ENCODE measurements at regions of chr19 and their contacts with region 1.

Region 1: GRCh38 chr19:14571695-14572490 is at the start of gene NDUFB7:
- DNase-seq: peak; percentile 97
- H3K4me3 ChIP-seq: peak within 1 kb of the TSS; percentile 98
- H3K27ac ChIP-seq: no peak within 1 kb of the TSS
- H3K4me1 ChIP-seq: peaks cover 4% of the 10 kb centered on the region
- H3K27me3 ChIP-seq: no peaks in the 10 kb centered on the region
- total RNA-seq, gene NDUFB7: 186 and 244 TPM in 2 replicates

Region 2: DNA sequence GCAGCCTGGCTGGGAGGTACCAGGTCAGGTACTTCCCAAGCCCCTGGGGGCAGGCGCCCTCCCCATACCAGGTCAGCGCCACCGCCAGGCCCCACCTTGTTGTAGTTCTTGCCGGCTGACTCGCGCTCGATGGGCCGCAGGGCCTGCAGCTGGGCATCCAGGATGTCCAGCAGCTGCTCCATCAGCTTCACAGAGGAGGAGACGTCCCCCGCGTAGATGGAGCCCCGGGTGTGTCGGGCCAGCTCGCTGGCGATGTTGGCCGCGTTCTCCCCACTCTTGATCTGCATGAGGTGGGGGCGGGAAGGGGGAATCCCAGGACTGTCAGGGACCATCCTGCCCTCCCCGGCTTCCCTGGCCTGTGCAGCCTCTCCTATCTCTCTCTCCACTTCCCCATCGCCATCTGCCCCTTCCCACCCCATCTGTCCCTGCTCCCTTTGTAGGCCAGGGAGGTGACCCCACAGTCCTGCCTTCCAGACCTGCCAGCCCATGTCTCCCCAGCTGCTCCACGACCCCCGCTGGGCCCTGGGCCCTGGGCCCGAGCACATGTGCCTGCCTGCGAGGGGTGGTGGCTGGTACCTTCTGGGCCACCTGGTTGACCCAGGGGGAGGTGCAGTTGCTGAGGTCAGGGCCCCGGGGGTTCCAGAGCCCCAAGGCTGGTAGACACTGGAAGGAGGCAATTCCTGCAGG is 411.7 kb before region 1 on chr19:
- in situ Hi-C with region 1: no loop called
- DNase-seq: no peak
- H3K4me3 ChIP-seq: no peak overlapping the region
- H3K27ac ChIP-seq: no peak overlapping the region
- H3K4me1 ChIP-seq: no peaks in the 10 kb centered on the region
- H3K27me3 ChIP-seq: no peaks in the 10 kb centered on the region

Region 3: GRCh38 chr19:14405758-14406644 is 165.9 kb before region 1 on chr19:
- in situ Hi-C with region 1: no loop called
- DNase-seq: peak; percentile 86
- H3K4me3 ChIP-seq: no peak overlapping the region
- H3K27ac ChIP-seq: no peak overlapping the region
- H3K4me1 ChIP-seq: no peaks in the 10 kb centered on the region
- H3K27me3 ChIP-seq: no peaks in the 10 kb centered on the region

Region 4: GRCh38 chr19:14674764-14675163 is 102.9 kb after region 1 on chr19 and contains the start of gene ADGRE3:
- in situ Hi-C with region 1: no loop called
- DNase-seq: peak; percentile 5
- H3K4me3 ChIP-seq: no peak within 1 kb of the TSS
- H3K27ac ChIP-seq: no peak within 1 kb of the TSS
- H3K4me1 ChIP-seq: no peaks in the 10 kb centered on the region
- H3K27me3 ChIP-seq: no peaks in the 10 kb centered on the region
- total RNA-seq, gene ADGRE3: not detected in 2 replicates

Region 5: GRCh38 chr19:14689598-14690503 is 118.0 kb after region 1 on chr19 and contains the start of gene ZNF333:
- in situ Hi-C with region 1: loop called (anchors 5 kb)
- DNase-seq: peak; percentile 95
- H3K4me3 ChIP-seq: peak within 1 kb of the TSS; percentile 88
- H3K27ac ChIP-seq: peak within 1 kb of the TSS; percentile 84
- H3K4me1 ChIP-seq: peaks cover 8% of the 10 kb centered on the region
- H3K27me3 ChIP-seq: no peaks in the 10 kb centered on the region
- total RNA-seq, gene ZNF333: 20.4 and 26.3 TPM in 2 replicates